CD4-positive, alpha-beta T cell (primary cell): ENCODE measurements at regions of chr10 and their contacts with region 1.

Region 1: DNA sequence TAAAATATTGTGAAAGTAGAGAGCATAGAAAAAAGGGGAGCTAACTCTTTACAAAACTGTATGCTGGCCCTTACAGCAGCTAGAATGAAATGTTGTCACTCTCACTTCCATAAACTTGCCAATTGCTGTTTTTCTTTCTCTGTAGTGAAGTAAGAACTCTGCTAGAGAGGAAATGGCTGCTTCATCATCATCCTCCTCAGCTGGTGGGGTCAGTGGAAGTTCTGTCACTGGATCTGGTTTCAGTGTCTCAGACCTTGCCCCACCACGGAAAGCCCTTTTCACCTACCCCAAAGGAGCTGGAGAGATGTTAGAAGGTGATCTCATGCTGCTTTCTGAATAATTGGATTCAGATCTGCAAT is 7.6 kb upstream of the ASCC1 start:
- DNase-seq: peak in 2 of 14 experiments; percentile 48 to 53
- ATAC-seq: no peak
- H3K4me3 ChIP-seq: no peak overlapping the region
- H3K4me3 Mint-ChIP-seq: peak overlapping the region; percentile 7
- H3K27ac ChIP-seq: no peak overlapping the region
- H3K27ac Mint-ChIP-seq: peak overlapping the region; percentile 53
- H3K4me1 ChIP-seq: peaks cover 44% of the 10 kb centered on the region
- H3K4me1 Mint-ChIP-seq: peaks cover 54% of the 10 kb centered on the region
- H3K27me3 ChIP-seq: no peaks in the 10 kb centered on the region
- H3K27me3 Mint-ChIP-seq: no peaks in the 10 kb centered on the region
- CTCF ChIP-seq: no peak

Region 2: GRCh38 chr10:71899665-71900412 is 323.9 kb before region 1 on chr10:
- CTCF ChIA-PET with region 1: interaction called, 3 read pairs
- POLR2A ChIA-PET with region 1: no interaction called
- intact Hi-C with region 1: loop called in 1 of 2 experiments (anchors 5 kb)
- DNase-seq: no peak
- ATAC-seq: no peak
- H3K4me3 ChIP-seq: no peak overlapping the region
- H3K4me3 Mint-ChIP-seq: no peak overlapping the region
- H3K27ac ChIP-seq: no peak overlapping the region
- H3K27ac Mint-ChIP-seq: no peak overlapping the region
- H3K4me1 ChIP-seq: peaks cover 6% of the 10 kb centered on the region
- H3K4me1 Mint-ChIP-seq: peaks cover 15% of the 10 kb centered on the region
- H3K27me3 ChIP-seq: no peaks in the 10 kb centered on the region
- H3K27me3 Mint-ChIP-seq: no peaks in the 10 kb centered on the region
- CTCF ChIP-seq: no peak

Region 3: DNA sequence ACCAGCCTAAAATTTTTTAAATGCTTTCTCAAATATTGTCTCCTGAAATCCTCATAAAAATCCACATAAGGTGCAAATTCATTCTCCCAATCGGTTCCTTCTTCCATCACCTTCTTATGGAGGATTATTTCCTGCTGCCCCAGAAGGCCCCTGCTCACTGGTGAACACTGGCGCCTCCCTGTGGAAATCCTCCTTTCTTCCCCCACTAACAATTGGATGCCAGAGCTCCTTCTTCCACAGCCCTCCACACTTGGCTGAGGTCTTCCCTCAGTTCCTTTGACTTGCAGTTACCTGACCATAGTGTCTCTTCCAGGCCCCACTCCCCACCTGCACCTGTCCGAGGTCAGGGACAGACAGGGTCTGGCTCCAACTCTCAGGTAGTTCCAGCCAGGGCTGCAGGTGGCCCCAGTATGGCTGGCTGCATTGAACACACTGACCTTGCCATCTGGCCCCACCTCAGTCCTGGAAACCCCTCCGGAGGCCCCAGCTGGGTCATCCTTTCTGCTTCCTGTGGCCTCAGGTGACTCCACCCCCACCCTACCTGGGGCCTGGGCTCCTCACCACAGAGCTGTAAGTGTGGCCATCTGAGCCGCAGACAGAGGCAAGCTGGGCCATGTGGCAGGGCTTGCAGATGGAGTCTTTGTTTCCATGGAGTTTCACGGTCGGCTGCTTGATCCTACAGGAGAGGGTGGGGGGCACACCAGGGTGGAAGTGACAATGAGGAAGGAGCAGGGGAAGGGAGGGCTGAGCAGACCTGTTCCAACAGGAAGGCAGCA is 153.8 kb before region 1 on chr10:
- CTCF ChIA-PET with region 1: no interaction called
- POLR2A ChIA-PET with region 1: no interaction called
- intact Hi-C with region 1: loop called in 1 of 2 experiments (anchors 5 kb)
- DNase-seq: no peak
- ATAC-seq: no peak
- H3K4me3 ChIP-seq: no peak overlapping the region
- H3K4me3 Mint-ChIP-seq: peak overlapping the region; percentile 43
- H3K27ac ChIP-seq: peak overlapping the region in 1 of 2 donors; percentile 47
- H3K27ac Mint-ChIP-seq: peak overlapping the region; percentile 85
- H3K4me1 ChIP-seq: peaks cover 50% of the 10 kb centered on the region
- H3K4me1 Mint-ChIP-seq: peaks cover 50% of the 10 kb centered on the region
- H3K27me3 ChIP-seq: no peaks in the 10 kb centered on the region
- H3K27me3 Mint-ChIP-seq: no peaks in the 10 kb centered on the region
- CTCF ChIP-seq: no peak

Region 4: GRCh38 chr10:72126184-72126871 is 97.4 kb before region 1 on chr10:
- CTCF ChIA-PET with region 1: interaction called, 13 read pairs
- POLR2A ChIA-PET with region 1: interaction called, 8 read pairs
- intact Hi-C with region 1: loop called in 1 of 2 experiments (anchors 2 kb)
- DNase-seq: peak in 3 of 14 experiments; percentile 53 to 60 (median 58)
- ATAC-seq: peak; percentile 26
- H3K4me3 ChIP-seq: no peak overlapping the region
- H3K4me3 Mint-ChIP-seq: no peak overlapping the region
- H3K27ac ChIP-seq: no peak overlapping the region
- H3K27ac Mint-ChIP-seq: peak overlapping the region; percentile 43
- H3K4me1 ChIP-seq: peaks cover 11% of the 10 kb centered on the region
- H3K4me1 Mint-ChIP-seq: peaks cover 58% of the 10 kb centered on the region
- H3K27me3 ChIP-seq: no peaks in the 10 kb centered on the region
- H3K27me3 Mint-ChIP-seq: no peaks in the 10 kb centered on the region
- CTCF ChIP-seq: peak; percentile 42

Region 5: GRCh38 chr10:72133517-72133916 is 90.2 kb before region 1 on chr10:
- CTCF ChIA-PET with region 1: interaction called, 4 read pairs
- POLR2A ChIA-PET with region 1: interaction called, 3 read pairs
- intact Hi-C with region 1: loop called in 1 of 2 experiments (anchors 2 kb)
- DNase-seq: peak in 2 of 14 experiments; percentile 30 to 33
- ATAC-seq: no peak
- H3K4me3 ChIP-seq: no peak overlapping the region
- H3K4me3 Mint-ChIP-seq: no peak overlapping the region
- H3K27ac ChIP-seq: no peak overlapping the region
- H3K27ac Mint-ChIP-seq: peak overlapping the region; percentile 45
- H3K4me1 ChIP-seq: peaks cover 21% of the 10 kb centered on the region
- H3K4me1 Mint-ChIP-seq: peaks cover 44% of the 10 kb centered on the region
- H3K27me3 ChIP-seq: no peaks in the 10 kb centered on the region
- H3K27me3 Mint-ChIP-seq: no peaks in the 10 kb centered on the region
- CTCF ChIP-seq: no peak